Activated CD4-positive, alpha-beta memory T cell treated with anti-CD3 and anti-CD28 coated beads for 36 hours (primary cell): ENCODE measurements at regions of chr7 and their contacts with region 1.

Region 1: DNA sequence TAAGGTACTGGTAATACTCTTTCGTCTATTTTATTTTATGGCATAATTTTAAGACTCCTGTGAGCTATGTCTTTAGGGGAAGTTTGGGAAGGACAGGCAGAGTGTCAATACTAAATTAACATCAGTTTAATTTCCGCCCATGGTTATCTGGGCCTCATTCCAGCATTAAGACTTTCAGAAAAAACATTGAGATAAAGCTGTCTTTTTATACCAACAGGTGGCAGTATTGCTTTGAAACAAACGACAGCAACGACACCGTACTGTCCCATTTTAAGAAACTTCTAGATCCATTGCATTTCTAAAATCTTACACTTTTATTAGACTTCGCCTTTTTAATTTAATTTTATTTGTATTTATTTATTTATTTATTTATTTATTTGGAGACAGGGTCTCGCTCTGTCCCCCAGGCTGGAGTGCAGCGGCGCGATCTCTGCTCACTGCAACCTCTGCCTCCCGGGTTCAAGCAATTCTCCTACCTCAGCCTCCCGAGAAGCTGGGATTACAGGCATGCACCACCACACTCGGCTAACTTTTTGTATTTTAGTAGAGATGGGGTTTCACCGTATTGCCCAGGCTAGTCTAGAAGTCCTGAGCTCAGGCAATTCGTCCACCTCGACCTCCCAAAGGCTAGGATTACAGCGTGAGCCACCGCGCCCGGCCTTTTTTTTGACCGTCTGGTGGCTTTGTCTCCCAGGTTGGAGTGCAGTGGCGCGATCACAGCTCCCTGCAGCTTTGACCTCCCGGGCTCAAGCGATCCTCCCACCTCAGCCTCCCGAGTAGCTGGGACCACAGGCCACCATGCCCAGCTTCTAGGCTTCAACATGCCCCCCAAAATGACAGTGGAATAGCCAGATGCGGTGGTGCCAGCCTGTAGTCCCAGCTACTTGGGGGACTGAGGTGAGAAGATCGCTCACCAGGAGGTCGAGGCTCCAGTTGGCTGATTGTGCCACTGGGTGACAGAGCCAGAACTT is 78.7 kb upstream of the C1GALT1 start:
- DNase-seq: no peak
- H3K4me3 Mint-ChIP-seq: no peak overlapping the region
- H3K27ac Mint-ChIP-seq: no peak overlapping the region
- H3K4me1 Mint-ChIP-seq: peaks cover 18% of the 10 kb centered on the region
- H3K27me3 Mint-ChIP-seq: no peaks in the 10 kb centered on the region

Region 2: GRCh38 chr7:7257899-7258692 is 154.5 kb after region 1 on chr7:
- CTCF ChIA-PET with region 1: interaction called, 3 read pairs
- POLR2A ChIA-PET with region 1: no interaction called
- intact Hi-C with region 1: loop called (anchors 5 kb)
- DNase-seq: no peak
- H3K4me3 Mint-ChIP-seq: no peak overlapping the region
- H3K27ac Mint-ChIP-seq: peak overlapping the region; percentile 73
- H3K4me1 Mint-ChIP-seq: peaks cover 21% of the 10 kb centered on the region
- H3K27me3 Mint-ChIP-seq: no peaks in the 10 kb centered on the region

Region 3: GRCh38 chr7:7535691-7536090 is 432.1 kb after region 1 on chr7 and contains the start of gene COL28A1:
- CTCF ChIA-PET with region 1: interaction called, 45 read pairs
- POLR2A ChIA-PET with region 1: no interaction called
- intact Hi-C with region 1: loop called (anchors 1 kb)
- DNase-seq: no peak
- H3K4me3 Mint-ChIP-seq: no peak within 1 kb of the TSS
- H3K27ac Mint-ChIP-seq: no peak within 1 kb of the TSS
- H3K4me1 Mint-ChIP-seq: no peaks in the 10 kb centered on the region
- H3K27me3 Mint-ChIP-seq: peaks cover 8% of the 10 kb centered on the region
- total RNA-seq, gene COL28A1: 0.19 TPM in 1 of 2 experiments, not detected in the other

Region 4: GRCh38 chr7:8217200-8218068 is 1113.8 kb after region 1 on chr7:
- CTCF ChIA-PET with region 1: interaction called, 11 read pairs
- POLR2A ChIA-PET with region 1: no interaction called
- intact Hi-C with region 1: loop called (anchors 1 kb)
- DNase-seq: no peak
- H3K4me3 Mint-ChIP-seq: no peak overlapping the region
- H3K27ac Mint-ChIP-seq: no peak overlapping the region
- H3K4me1 Mint-ChIP-seq: peaks cover 2% of the 10 kb centered on the region
- H3K27me3 Mint-ChIP-seq: no peaks in the 10 kb centered on the region